GM18951 (cell line): ENCODE measurements at regions of chr9 and their contacts with region 1.

Region 1: GRCh38 chr9:97703437-97704344 is 6.6 kb upstream of the XPA start:
- POLR2A ChIP-seq: no peak

Region 2: GRCh38 chr9:97853844-97854695 is 150.4 kb after region 1 on chr9:
- in situ Hi-C with region 1: no loop called
- POLR2A ChIP-seq: no peak

Region 3: GRCh38 chr9:97890038-97890437 is 186.3 kb after region 1 on chr9:
- in situ Hi-C with region 1: loop called (anchors 10 kb)
- POLR2A ChIP-seq: no peak

Region 4: DNA sequence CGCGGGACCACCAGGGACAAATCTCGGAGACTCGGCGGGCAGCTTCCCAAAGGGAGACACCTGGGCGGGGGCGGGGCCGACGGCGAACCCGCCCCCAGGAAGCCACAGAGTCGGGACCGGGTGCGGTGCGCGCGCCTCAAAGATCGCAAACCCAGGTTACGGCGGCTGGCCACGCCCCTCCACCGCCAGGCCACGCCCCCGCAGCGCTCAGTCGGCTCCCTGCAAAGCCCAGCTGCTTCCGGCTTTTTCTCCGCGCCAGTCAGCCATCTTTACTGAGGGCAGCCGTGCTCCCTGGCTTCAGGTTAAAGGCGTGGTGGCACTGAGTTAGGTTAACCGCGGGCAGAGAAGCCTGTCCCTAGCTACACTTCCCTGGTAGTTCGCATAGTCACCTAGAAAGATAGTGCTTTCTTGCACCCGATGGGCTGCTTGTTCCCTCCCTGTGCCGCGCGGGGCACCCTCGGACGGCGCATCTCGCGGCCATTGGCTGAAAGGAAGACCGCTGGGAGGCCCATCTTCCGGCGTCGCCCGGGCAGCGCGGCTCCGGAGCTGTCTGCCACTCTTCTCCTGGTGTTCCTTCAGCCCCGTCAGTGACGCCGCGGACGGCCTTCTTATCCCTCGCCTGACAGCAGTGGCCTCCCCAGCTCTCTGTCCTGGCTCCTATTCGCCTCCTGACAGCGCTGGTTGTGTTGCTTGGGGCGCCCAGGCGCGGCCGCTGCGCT is 552.0 kb after region 1 on chr9 and contains the start of gene TBC1D2:
- in situ Hi-C with region 1: no loop called
- POLR2A ChIP-seq: peak; percentile 81